Heart right ventricle (tissue), 16 donors: ENCODE measurements at regions of chr3 and their contacts with region 1.

Region 1: DNA sequence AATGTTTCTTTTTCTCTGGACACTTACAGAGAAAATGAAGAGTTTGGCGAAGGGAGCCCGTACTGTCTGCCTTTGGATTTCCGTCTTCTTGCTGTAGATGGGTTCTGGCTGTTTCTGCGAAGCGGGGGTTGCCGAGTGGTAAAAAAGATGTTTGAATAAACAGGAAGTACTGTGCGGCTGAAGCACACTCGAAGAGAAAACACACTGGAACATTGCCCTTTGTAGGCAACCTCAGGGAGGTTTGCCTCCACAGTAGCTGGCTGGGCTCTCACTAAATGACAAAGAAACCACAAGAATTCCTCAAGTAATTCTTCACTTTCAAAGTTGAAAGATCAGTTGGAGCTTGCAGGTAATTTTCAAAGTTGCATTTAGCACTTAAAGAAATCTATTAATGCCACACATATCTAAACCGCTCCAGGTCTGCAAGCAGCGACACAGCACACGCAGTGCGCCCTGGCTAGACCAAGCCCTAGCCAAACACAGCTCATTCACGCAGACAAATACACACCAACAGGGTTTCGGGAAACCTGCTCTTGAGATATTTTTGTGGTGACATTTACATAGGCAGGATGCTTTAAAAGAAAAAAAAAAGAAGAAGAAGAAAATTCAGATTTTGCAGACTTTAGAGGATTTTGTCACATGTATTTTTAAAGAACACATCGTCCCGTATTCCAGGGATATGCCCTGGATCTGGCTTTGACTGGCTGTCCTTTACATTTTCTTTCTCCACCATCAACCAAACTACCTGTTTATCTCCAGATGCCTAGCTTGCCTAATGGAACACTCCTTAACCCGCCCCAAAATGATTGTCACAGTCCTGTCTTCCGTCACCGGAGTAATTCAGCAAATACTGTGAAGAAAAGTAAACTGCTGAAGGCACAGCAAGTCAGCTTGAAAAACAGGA is 452.8 kb downstream of the FOXP1 start:
- DNase-seq: peak; percentile 33 to 66
- ATAC-seq: peak; percentile 48 to 80 (median 72)
- H3K4me3 ChIP-seq: peak overlapping the region; percentile 33 to 65 (median 58)
- H3K27ac ChIP-seq: peak overlapping the region; percentile 74 to 94 (median 87)
- H3K4me1 ChIP-seq: peaks cover 10 to 82% (median 62%) of the 10 kb centered on the region in 9 donors
- H3K27me3 ChIP-seq: no peaks in the 10 kb centered on the region
- CTCF ChIP-seq: no peak

Region 2: GRCh38 chr3:71006810-71007785 is 123.6 kb before region 1 on chr3:
- intact Hi-C with region 1: loop called in 1 of 10 experiments (anchors 5 kb)
- DNase-seq: no peak
- ATAC-seq: peak in 7 of 8 donors; percentile 48 to 82 (median 66)
- H3K4me3 ChIP-seq: no peak overlapping the region
- H3K27ac ChIP-seq: peak overlapping the region in 8 of 10 donors; percentile 16 to 59 (median 40)
- H3K4me1 ChIP-seq: peaks cover 3 to 86% (median 55%) of the 10 kb centered on the region in 9 donors
- H3K27me3 ChIP-seq: no peaks in the 10 kb centered on the region
- CTCF ChIP-seq: peak; percentile 10 to 76 (median 58)

Region 3: GRCh38 chr3:71064288-71064955 is 66.3 kb before region 1 on chr3:
- intact Hi-C with region 1: loop called in 6 of 10 experiments (anchors 1 to 5 kb)
- DNase-seq: peak in 1 of 2 donors; percentile 50
- ATAC-seq: peak; percentile 35 to 72 (median 56)
- H3K4me3 ChIP-seq: peak overlapping the region; percentile 26 to 78 (median 68)
- H3K27ac ChIP-seq: peak overlapping the region; percentile 66 to 98 (median 94)
- H3K4me1 ChIP-seq: peaks cover 5 to 73% (median 58%) of the 10 kb centered on the region in 9 donors
- H3K27me3 ChIP-seq: no peaks in the 10 kb centered on the region
- CTCF ChIP-seq: no peak

Region 4: DNA sequence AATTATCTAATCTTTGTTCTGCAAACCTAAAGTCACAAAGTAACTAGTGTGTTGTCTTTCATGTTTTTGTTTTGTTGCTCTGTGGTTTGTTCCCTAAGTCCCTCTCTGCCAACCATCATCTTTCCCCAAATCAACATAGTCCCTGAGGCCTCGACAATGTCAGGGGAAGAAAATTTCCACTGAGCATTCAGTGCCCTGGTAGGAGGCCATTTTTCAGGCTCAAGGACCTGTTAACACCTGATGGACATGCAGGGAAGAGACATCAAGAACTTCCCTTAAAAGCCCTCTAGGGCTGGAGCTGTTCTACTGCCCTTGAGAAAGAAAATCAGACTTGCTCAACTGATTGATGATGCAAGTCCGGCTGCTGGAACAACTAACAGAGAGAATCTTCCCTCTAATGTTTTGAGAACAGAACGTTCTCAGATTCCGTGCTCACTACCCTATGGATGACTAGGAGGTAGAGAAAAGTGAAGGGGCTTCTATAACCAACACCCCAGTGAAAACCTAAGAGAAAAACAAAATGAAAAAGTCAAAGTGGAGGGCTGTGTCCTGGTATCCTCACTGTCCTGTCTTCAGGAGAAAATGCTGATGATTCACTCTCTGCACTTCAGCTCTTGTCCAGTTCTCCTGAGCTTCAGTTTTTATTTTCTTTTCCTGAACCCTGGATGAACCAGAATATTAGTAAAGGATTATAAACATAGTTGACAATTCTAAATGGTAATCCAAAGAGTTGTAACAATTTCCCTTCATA is 79.7 kb after region 1 on chr3:
- intact Hi-C with region 1: no loop called
- DNase-seq: no peak
- ATAC-seq: peak in 7 of 8 donors; percentile 27 to 92 (median 64)
- H3K4me3 ChIP-seq: no peak overlapping the region
- H3K27ac ChIP-seq: peak overlapping the region in 7 of 10 donors; percentile 7 to 61 (median 39)
- H3K4me1 ChIP-seq: peaks cover 0 to 46% (median 32%) of the 10 kb centered on the region in 9 donors
- H3K27me3 ChIP-seq: no peaks in the 10 kb centered on the region
- CTCF ChIP-seq: peak in 2 of 9 donors; percentile 7 to 15

Region 5: DNA sequence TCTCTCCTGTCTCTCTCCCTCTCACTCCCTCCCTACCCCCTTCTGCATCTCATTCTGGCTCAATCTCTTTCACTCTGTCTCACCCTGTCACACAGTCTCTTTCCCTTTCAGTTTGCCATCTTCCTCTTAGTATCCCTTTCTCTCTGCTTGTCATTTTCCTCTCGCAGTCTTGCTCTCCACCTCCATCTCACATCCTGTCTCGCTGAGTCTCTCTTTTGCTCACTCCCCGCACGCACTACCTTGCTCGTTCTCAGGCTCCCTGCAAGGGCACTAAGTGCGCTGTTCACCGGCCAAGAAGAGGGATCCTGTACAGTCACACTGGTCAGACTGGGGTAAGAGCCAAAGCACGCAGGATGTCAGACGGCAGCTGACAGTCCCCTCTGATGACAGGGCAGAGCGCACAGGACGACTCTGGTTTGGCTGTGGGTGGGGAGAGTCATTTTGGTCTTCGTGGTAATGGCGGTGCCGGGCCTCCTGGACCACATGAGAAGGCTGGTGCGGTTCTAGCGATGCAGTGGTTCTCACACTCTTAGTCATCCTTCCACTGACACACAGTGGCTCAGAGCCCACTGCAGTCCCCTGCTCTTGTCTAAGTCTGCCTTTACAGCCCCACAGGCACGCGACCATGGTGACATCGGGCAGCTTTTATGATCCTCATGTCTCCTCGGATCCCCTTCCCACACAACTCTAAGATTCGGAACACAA is 96.0 kb after region 1 on chr3:
- intact Hi-C with region 1: loop called in 2 of 10 experiments (anchors 10 kb)
- DNase-seq: peak; percentile 50 to 71
- ATAC-seq: peak; percentile 74 to 96 (median 93)
- H3K4me3 ChIP-seq: peak overlapping the region in 9 of 10 donors; percentile 1 to 54 (median 40)
- H3K27ac ChIP-seq: peak overlapping the region in 9 of 10 donors; percentile 22 to 82 (median 65)
- H3K4me1 ChIP-seq: peaks cover 0 to 35% (median 25%) of the 10 kb centered on the region in 9 donors
- H3K27me3 ChIP-seq: no peaks in the 10 kb centered on the region
- CTCF ChIP-seq: no peak